B cell (primary cell): ENCODE measurements at regions of chr15 and their contacts with region 1.

Region 1: DNA sequence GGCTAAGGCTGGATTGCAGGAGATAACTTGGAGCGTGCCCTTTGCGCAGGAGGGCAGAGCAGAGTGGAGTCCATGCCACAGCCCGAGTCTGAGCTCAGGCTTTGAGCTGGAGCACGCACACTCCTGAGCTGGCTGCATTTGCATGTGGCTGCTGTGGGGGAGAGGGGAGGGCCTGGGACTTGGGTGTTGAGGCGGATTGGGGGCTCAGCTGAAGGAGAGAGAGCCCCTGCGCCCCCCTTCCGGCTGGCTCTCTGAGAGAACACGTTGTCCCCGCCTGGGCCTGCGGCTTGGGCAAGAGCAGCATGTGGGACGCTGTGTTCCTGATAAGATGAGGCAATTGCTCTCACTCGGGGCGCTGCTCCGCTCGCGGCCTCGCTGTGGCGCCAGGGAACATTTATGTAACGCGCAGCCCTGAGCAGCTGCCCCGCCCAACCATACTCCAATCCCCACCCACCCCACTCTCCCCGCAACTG is 39.1 kb downstream of the KLF13 start:
- DNase-seq: peak; percentile 79
- ATAC-seq: peak; percentile 31
- H3K4me3 ChIP-seq: peak overlapping the region in 4 of 5 experiments; percentile 5 to 33 (median 15)
- H3K4me3 Mint-ChIP-seq: peak overlapping the region; percentile 80
- H3K27ac ChIP-seq: no peak overlapping the region
- H3K27ac Mint-ChIP-seq: peak overlapping the region; percentile 93
- H3K4me1 ChIP-seq: peaks cover 85 to 87% of the 10 kb centered on the region in 2 donors
- H3K4me1 Mint-ChIP-seq: peaks cover 95% of the 10 kb centered on the region
- H3K27me3 ChIP-seq: no peaks in the 10 kb centered on the region
- H3K27me3 Mint-ChIP-seq: no peaks in the 10 kb centered on the region
- CTCF ChIP-seq: peak; percentile 59

Region 2: DNA sequence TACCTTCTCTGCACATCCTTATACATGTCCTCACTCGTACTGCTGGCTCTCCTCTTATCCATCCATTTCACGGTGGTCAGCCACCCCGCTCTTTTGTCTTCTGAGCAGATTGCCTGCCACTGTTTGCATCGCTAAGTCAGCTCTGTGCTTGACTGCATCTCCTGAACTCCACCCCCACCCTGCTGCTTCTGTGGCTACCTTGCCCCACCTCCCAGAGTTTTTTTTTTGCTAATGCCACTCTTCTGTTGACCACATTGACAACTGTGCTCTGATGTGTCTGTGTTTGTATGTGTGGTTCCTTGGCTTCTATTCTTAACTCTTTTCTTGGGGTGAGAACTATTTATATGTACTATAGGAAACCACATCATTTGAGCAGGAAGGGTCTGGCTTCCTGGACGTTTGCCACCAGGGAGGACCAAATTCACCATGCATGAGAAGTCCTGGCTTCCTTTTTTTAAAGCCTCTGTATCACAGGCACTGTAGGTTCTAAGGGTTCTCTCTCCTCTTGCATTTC is 361.4 kb before region 1 on chr15:
- CTCF ChIA-PET with region 1: no interaction called
- POLR2A ChIA-PET with region 1: no interaction called
- intact Hi-C with region 1: loop called (anchors 10 kb)
- DNase-seq: peak; percentile 83
- ATAC-seq: peak; percentile 92
- H3K4me3 ChIP-seq: peak overlapping the region in 4 of 5 experiments; percentile 3 to 47 (median 30)
- H3K4me3 Mint-ChIP-seq: peak overlapping the region; percentile 75
- H3K27ac ChIP-seq: peak overlapping the region; percentile 28 to 55
- H3K27ac Mint-ChIP-seq: peak overlapping the region; percentile 90
- H3K4me1 ChIP-seq: peaks cover 46 to 61% of the 10 kb centered on the region in 2 donors
- H3K4me1 Mint-ChIP-seq: peaks cover 84% of the 10 kb centered on the region
- H3K27me3 ChIP-seq: no peaks in the 10 kb centered on the region
- H3K27me3 Mint-ChIP-seq: no peaks in the 10 kb centered on the region
- CTCF ChIP-seq: no peak

Region 3: DNA sequence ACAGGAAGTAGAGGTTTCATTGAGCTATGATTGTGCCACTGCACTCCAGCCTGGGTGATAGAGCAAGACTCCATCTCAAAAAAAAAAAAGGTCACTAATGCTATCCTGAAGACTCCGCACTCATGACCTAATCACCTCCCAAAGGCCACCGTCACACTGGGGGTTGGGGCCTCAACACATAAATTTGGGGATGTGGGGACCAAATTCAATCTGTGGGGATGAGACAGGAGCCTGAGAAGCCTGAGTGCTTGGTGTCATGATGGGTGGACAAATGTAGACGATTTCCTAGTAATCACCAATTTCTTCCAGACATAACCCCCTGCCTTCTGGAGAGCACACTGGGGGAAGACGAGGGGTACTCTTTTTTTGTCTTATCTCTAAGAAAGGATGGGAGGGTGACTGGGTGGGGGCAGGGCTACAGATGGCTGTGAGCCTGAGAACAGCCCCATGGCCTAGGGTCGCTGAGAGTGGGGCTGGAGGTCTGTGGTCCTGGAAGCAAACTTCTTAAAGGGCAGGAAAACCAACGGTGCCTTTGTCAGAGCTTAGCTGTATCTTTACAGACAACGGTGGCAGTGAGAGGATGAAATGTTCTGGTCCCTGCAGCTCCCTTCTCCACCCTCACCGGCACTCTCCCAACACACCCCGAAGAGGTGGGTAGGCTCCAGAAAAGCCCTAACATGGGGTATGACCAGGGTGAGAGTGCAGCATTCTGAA is 55.6 kb before region 1 on chr15:
- CTCF ChIA-PET with region 1: no interaction called
- POLR2A ChIA-PET with region 1: no interaction called
- intact Hi-C with region 1: no loop called
- DNase-seq: no peak
- ATAC-seq: no peak
- H3K4me3 ChIP-seq: no peak overlapping the region
- H3K4me3 Mint-ChIP-seq: no peak overlapping the region
- H3K27ac ChIP-seq: no peak overlapping the region
- H3K27ac Mint-ChIP-seq: no peak overlapping the region
- H3K4me1 ChIP-seq: peaks cover 8 to 30% of the 10 kb centered on the region in 2 donors
- H3K4me1 Mint-ChIP-seq: peaks cover 23% of the 10 kb centered on the region
- H3K27me3 ChIP-seq: peaks cover 0 to 4% (median 0%) of the 10 kb centered on the region in 4 experiments
- H3K27me3 Mint-ChIP-seq: no peaks in the 10 kb centered on the region
- CTCF ChIP-seq: no peak

Region 4: GRCh38 chr15:31344823-31345605 is 20.7 kb before region 1 on chr15:
- CTCF ChIA-PET with region 1: interaction called, 15 read pairs
- POLR2A ChIA-PET with region 1: interaction called, 12 read pairs
- intact Hi-C with region 1: loop called (anchors 2 kb)
- DNase-seq: no peak
- ATAC-seq: peak; percentile 62
- H3K4me3 ChIP-seq: peak overlapping the region in 4 of 5 experiments; percentile 42 to 70 (median 58)
- H3K4me3 Mint-ChIP-seq: peak overlapping the region; percentile 95
- H3K27ac ChIP-seq: peak overlapping the region; percentile 90 to 97
- H3K27ac Mint-ChIP-seq: peak overlapping the region; percentile 99
- H3K4me1 ChIP-seq: peaks cover 100% of the 10 kb centered on the region in 2 donors
- H3K4me1 Mint-ChIP-seq: peaks cover 99% of the 10 kb centered on the region
- H3K27me3 ChIP-seq: no peaks in the 10 kb centered on the region
- H3K27me3 Mint-ChIP-seq: no peaks in the 10 kb centered on the region
- CTCF ChIP-seq: no peak

Region 5: DNA sequence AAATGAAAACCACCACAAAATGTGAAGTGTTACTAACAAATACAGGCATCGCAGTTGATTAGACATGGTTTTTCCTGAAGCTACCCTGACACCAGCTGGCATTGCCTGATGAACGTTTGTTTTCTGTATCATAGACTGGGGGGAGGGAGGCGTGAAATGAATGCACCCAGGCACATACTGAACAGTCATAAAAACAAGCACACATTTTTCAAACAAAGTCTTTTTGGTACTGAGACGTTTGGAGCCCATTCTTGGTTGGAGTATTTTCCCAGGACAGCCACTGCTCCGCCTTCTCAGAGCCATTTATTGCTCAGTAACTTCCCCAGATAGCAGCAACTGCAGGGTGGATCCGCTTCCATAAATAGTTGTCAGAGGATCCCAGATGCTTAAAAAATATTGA is 13.4 kb after region 1 on chr15:
- CTCF ChIA-PET with region 1: interaction called, 7 read pairs
- POLR2A ChIA-PET with region 1: no interaction called
- intact Hi-C with region 1: loop called (anchors 2 kb)
- DNase-seq: no peak
- ATAC-seq: peak; percentile 55
- H3K4me3 ChIP-seq: no peak overlapping the region
- H3K4me3 Mint-ChIP-seq: no peak overlapping the region
- H3K27ac ChIP-seq: peak overlapping the region in 1 of 2 donors; percentile 56
- H3K27ac Mint-ChIP-seq: peak overlapping the region; percentile 67
- H3K4me1 ChIP-seq: peaks cover 21 to 26% of the 10 kb centered on the region in 2 donors
- H3K4me1 Mint-ChIP-seq: peaks cover 46% of the 10 kb centered on the region
- H3K27me3 ChIP-seq: no peaks in the 10 kb centered on the region
- H3K27me3 Mint-ChIP-seq: no peaks in the 10 kb centered on the region
- CTCF ChIP-seq: no peak

Region 6: DNA sequence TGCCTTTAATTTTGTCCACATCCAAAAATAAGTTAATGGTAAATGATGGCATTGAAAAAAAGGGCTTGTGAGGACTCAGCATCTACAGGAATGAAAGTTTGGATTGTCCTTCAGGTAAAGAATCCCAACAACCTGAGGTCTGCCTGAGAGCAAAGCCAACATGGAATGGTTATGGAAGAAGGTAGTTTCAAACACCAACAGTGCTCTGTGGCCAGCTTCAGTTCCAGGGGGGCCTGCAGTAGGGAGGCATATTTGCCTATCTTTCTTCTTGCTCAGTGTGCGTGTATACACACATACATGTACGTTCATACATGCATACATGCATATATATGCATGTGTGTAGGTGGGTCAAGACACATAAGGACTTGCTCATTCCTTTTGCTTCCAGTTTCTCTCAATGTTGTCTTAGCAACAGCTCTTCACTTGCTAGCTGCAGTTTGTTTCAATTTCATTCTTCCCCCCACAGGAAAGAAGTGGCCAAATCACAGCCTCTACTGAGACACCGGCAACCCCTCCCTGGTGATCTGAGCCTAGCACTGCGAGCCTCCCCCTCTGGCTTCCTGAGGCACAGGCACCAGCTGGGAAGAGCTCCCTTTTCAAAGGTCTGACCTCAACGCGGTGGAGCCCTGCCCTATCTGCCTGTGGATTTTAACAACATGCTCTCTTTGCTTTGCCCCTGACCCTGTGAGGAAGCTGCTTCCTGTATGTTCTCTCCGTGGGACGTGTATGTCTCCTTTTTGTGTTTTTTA is 107.1 kb after region 1 on chr15:
- CTCF ChIA-PET with region 1: no interaction called
- POLR2A ChIA-PET with region 1: interaction called, 4 read pairs
- intact Hi-C with region 1: loop called (anchors 5 kb)
- DNase-seq: peak; percentile 79
- ATAC-seq: peak; percentile 88
- H3K4me3 ChIP-seq: peak overlapping the region in 4 of 5 experiments; percentile 37 to 61 (median 55)
- H3K4me3 Mint-ChIP-seq: peak overlapping the region; percentile 85
- H3K27ac ChIP-seq: peak overlapping the region; percentile 86 to 88
- H3K27ac Mint-ChIP-seq: peak overlapping the region; percentile 92
- H3K4me1 ChIP-seq: peaks cover 30 to 41% of the 10 kb centered on the region in 2 donors
- H3K4me1 Mint-ChIP-seq: peaks cover 51% of the 10 kb centered on the region
- H3K27me3 ChIP-seq: no peaks in the 10 kb centered on the region
- H3K27me3 Mint-ChIP-seq: no peaks in the 10 kb centered on the region
- CTCF ChIP-seq: no peak